ENCODE measurements at regions of chr14 and their contacts with region 1.

Region 1: GRCh38 chr14:99518441-99519346 is 37.5 kb downstream of the CCNK start:
- DNase-seq: peak; percentile 86
- H3K4me3 ChIP-seq: no peak overlapping the region
- H3K27ac ChIP-seq: no peak overlapping the region
- H3K4me1 ChIP-seq: peaks cover 14 to 26% (median 19%) of the 10 kb centered on the region in 4 donors
- H3K27me3 ChIP-seq: no peaks in the 10 kb centered on the region
- CTCF ChIP-seq: peak; percentile 95 to 99 (median 97)
- EP300 ChIP-seq: no peak
- POLR2A ChIP-seq: no peak

Region 2: DNA sequence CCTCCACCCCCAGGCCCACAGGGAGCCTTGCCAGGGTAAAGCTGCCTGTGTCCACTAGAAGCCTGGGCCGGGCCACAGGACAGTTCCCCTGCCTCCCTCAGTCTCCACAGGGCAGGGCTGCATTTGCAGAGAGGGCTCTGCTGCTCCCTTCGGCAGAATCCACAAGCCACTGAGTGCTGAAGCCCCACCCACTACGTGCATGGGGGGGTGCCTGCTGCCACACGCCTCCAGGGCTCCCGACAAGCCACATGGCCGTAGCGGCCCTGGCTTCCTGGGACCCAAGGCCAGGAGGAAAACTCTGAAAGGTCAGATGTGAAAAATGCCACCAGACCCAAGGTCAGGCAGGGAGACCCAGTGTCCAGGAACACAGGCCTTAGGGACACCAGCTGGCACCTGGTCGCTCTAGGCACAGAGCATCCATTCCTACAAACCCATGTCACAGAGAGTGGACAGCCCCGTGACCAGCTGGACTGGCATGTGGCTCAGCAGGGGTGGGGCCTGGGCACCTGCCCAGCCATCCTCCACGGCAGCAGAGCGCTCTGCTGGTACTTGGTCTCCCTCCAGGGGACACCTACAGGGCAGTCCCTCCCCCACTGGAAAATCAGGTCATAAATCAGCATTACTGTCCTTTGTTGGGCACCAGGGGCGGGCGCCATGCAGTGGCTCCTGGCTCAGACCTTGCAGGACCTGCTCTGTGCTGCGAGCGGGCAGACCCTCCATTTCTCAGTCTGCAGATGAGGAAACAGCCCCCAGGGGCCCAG is 42.4 kb after region 1 on chr14:
- in situ Hi-C with region 1: no loop called
- intact Hi-C with region 1: loop called (anchors 1 kb)
- DNase-seq: no peak
- H3K4me3 ChIP-seq: no peak overlapping the region
- H3K27ac ChIP-seq: peak overlapping the region; percentile 67 to 86 (median 82)
- H3K4me1 ChIP-seq: peaks cover 33 to 60% (median 55%) of the 10 kb centered on the region in 4 donors
- H3K27me3 ChIP-seq: no peaks in the 10 kb centered on the region
- CTCF ChIP-seq: no peak
- EP300 ChIP-seq: no peak
- POLR2A ChIP-seq: no peak

Region 3: DNA sequence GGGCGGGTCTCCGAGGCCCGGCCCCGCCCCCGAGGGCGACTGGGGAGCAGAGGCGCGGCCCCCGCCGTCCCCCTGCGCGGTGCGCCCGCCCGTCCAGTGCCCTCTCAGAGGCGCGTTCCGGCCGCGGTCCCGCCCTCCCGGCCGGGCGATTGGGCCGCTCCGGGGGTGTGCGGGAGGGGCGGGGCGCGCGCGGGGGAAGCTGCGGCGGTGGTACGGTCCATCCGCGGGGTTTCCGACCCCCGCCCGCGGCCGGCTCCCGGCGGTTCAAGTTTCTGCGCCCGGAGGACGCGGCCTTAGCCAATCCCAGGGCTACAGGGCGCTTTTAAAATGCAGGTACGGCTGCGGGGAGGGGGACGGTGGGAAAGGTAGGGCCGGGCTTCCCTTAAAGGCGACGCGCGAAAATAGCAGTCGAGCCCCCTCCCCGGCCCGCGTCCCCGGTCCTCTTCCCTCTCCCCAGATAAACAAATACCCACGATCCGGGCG is 85.6 kb after region 1 on chr14:
- in situ Hi-C with region 1: loop called in 1 of 4 experiments (anchors 25 kb)
- intact Hi-C with region 1: no loop called
- DNase-seq: peak; percentile 97
- H3K4me3 ChIP-seq: peak overlapping the region; percentile 54 to 83 (median 72)
- H3K27ac ChIP-seq: peak overlapping the region; percentile 91 to 97 (median 94)
- H3K4me1 ChIP-seq: peaks cover 29 to 51% (median 41%) of the 10 kb centered on the region in 4 donors
- H3K27me3 ChIP-seq: no peaks in the 10 kb centered on the region
- CTCF ChIP-seq: no peak
- EP300 ChIP-seq: no peak
- POLR2A ChIP-seq: peak; percentile 48

Measured in transverse colon (tissue), 4 donors.